ENCODE measurements at regions of chr5 and their contacts with region 1.

Region 1: GRCh38 chr5:140372971-140373487 is 13.0 kb downstream of the SLC4A9 start:
- DNase-seq: peak; percentile 85 to 89
- ATAC-seq: peak; percentile 89
- H3K4me3 ChIP-seq: no peak overlapping the region
- H3K27ac ChIP-seq: no peak overlapping the region
- H3K4me1 ChIP-seq: no peaks in the 10 kb centered on the region
- H3K27me3 ChIP-seq: no peaks in the 10 kb centered on the region

Region 2: GRCh38 chr5:140273401-140273877 is 99.6 kb before region 1 on chr5:
- intact Hi-C with region 1: no loop called
- DNase-seq: peak in 1 of 2 donors; percentile 54
- ATAC-seq: no peak
- H3K4me3 ChIP-seq: no peak overlapping the region
- H3K27ac ChIP-seq: no peak overlapping the region
- H3K4me1 ChIP-seq: peaks cover 0 to 2% of the 10 kb centered on the region in 2 donors
- H3K27me3 ChIP-seq: no peaks in the 10 kb centered on the region

Region 3: GRCh38 chr5:140677947-140678346 is 304.9 kb after region 1 on chr5:
- intact Hi-C with region 1: no loop called
- DNase-seq: no peak
- ATAC-seq: no peak
- H3K4me3 ChIP-seq: no peak overlapping the region
- H3K27ac ChIP-seq: no peak overlapping the region
- H3K4me1 ChIP-seq: no peaks in the 10 kb centered on the region
- H3K27me3 ChIP-seq: no peaks in the 10 kb centered on the region

Region 4: DNA sequence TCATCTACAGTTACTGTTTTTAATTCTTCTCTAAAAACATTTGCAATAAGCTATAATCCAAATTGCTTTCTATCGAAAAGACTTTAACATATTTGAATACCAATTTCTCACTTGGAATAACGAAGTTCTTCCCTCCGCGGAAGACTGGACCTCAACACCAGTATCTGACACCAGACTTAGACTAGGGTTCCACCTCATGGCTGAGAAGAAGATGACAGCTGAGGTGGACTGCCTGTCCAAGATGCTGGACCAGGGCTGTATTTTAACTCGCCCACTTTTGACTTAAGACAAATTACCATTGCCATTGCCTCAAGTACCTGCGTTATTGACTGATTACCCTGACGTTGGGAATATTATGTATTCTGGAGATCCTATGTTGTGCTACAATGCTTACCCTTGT is 361.3 kb after region 1 on chr5:
- intact Hi-C with region 1: loop called (anchors 5 to 10 kb)
- DNase-seq: no peak
- ATAC-seq: no peak
- H3K4me3 ChIP-seq: no peak overlapping the region
- H3K27ac ChIP-seq: no peak overlapping the region
- H3K4me1 ChIP-seq: no peaks in the 10 kb centered on the region
- H3K27me3 ChIP-seq: no peaks in the 10 kb centered on the region

Region 5: DNA sequence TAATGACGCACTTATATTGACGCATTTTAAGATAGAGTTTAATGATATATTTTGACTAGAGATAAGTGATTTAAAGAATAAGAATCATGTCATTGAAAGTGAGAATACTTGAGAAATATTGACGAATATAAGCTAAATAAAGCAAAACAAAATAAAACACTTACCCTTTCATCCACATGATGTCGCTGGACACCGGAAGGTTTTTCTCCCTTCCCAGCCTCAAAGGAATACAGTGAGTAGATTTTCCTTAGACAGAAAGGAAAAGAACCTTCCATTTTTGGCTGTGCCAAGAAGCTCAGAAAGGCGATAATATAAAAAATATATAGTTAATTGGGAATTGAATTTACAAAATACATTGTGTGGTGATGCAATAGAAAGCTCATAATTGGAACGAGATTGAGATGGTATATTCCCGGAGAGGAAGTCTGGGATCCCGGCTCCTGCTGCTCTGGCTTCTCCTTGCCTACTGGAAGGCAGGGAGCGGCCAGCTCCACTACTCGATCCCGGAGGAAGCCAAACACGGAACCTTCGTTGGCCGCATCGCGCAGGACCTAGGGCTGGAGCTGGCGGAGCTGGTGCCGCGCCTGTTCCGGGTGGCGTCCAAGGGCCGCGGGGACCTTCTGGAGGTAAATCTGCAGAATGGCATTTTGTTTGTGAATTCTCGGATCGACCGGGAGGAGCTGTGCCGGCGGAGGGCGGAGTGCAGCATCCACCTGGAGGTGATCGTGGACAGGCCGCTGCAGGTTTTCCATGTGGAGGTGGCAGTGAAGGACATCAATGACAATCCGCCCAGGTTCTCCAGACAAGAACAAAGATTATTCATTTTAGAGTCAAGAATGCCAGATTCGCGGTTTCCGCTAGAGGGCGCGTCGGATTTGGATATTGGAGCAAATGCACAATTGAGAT is 448.6 kb after region 1 on chr5 and contains the start of gene PCDHA5:
- intact Hi-C with region 1: no loop called
- DNase-seq: peak in 1 of 2 donors; percentile 70
- ATAC-seq: no peak
- H3K4me3 ChIP-seq: peak within 1 kb of the TSS in 1 of 2 donors; percentile 17
- H3K27ac ChIP-seq: no peak within 1 kb of the TSS
- H3K4me1 ChIP-seq: no peaks in the 10 kb centered on the region
- H3K27me3 ChIP-seq: no peaks in the 10 kb centered on the region
- total RNA-seq, gene PCDHA5: 0.24 to 0.26 TPM